IMR-90 (cell line): ENCODE measurements at regions of chr3 and their contacts with region 1.

Region 1: DNA sequence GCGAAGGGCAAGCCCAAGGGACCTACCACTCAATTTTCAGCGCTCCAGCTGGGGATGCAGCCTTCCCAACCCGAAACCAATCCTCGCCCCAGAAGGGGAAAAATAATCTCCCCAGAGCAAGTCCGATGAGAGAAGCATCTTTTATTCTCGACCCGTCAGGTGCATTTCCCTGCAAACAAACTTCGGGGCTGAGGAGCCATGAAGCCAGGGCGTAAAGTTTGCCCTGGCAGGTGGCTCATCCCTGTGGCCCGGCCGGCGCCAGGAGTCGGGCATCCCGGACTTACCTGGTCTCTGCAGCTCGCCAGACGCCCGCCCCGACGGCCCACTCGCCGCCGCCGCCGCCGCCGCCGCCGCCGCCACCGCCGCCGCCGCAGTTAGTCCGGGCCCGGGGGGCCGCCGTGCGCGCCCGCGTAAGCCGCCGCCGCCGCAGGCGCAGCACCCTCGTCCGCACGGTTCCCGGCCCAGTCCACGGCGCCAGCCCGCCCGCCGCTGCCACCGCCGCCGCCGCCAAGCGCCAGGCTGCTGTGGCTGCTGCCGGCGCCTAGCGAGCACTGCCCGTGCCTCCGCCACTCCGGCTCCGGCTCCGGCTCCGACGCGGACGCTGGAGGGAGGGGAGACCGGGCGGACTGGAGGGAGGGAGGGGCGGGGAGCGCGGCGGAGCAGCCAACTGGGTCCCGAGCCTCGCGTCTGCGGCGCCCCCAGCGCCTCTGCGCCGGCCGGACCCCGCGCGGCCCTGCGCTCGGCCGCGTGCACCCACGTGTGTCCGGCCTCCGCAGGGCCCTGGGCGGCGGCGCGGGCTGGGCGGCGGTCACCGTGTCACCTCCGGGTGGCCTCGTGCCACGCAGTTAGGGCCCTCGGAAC is at the start of gene CNTN3:
- DNase-seq: peak; percentile 49
- ATAC-seq: peak; percentile 88
- H3K4me3 ChIP-seq: peak within 1 kb of the TSS; percentile 68
- H3K27ac ChIP-seq: no peak within 1 kb of the TSS; the same call in 1 of the 2 replicates
- H3K4me1 ChIP-seq: peaks cover 3% of the 10 kb centered on the region; the same call in 1 of the 2 replicates
- H3K27me3 ChIP-seq: no peaks in the 10 kb centered on the region
- CTCF ChIP-seq: no peak
- POLR2A ChIP-seq: 0 out of 2 replicates have a peak, but pooled peaks have one; percentile 30
- RAD21 ChIP-seq: no peak
- total RNA-seq, gene CNTN3: 3.3 and 3.6 TPM in 2 replicates

Region 2: DNA sequence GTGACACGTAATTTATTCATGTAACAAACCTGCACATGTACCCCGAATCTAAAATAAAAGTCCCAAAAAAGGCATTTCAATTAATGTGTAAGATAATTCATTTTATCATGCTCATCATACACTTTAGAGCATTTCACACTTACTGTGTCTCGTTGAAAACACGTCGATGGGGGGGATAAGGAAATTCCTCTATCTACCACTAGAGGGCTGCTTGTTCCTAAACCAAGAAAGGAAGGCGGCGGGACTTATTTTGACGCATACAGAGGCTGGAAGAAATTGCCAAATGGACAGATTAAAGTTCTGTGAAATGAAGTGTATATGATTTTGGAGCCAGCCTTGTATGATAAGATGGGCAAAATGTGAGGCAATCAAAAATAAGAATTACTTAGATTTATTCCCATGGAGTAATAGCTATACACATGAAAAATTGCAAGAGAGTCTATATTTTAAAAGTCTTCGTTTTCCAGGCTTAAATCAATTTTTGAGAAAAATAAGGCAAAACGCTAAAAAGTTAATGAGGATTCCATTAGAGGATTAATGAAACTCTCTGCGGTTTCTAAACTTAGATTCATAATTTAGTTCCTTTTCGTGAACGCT is 346.7 kb before region 1 on chr3:
- CTCF ChIA-PET with region 1: no interaction called
- POLR2A ChIA-PET with region 1: no interaction called
- dilution Hi-C with region 1: no loop called
- in situ Hi-C with region 1: no loop called
- intact Hi-C with region 1: loop called (anchors 5 kb)
- DNase-seq: peak; percentile 63
- ATAC-seq: peak; percentile 81
- H3K4me3 ChIP-seq: no peak overlapping the region
- H3K27ac ChIP-seq: no peak overlapping the region
- H3K4me1 ChIP-seq: no peaks in the 10 kb centered on the region; the same call in 1 of the 2 replicates
- H3K27me3 ChIP-seq: no peaks in the 10 kb centered on the region
- CTCF ChIP-seq: peak; percentile 63
- POLR2A ChIP-seq: no peak
- RAD21 ChIP-seq: peak; percentile 60

Region 3: GRCh38 chr3:74426571-74426970 is 187.8 kb before region 1 on chr3:
- CTCF ChIA-PET with region 1: no interaction called
- POLR2A ChIA-PET with region 1: no interaction called
- dilution Hi-C with region 1: no loop called
- in situ Hi-C with region 1: no loop called
- intact Hi-C with region 1: loop called (anchors 10 kb)
- DNase-seq: peak; percentile 84
- ATAC-seq: peak; percentile 90
- H3K4me3 ChIP-seq: no peak overlapping the region
- H3K27ac ChIP-seq: no peak overlapping the region
- H3K4me1 ChIP-seq: no peaks in the 10 kb centered on the region
- H3K27me3 ChIP-seq: no peaks in the 10 kb centered on the region
- CTCF ChIP-seq: no peak
- POLR2A ChIP-seq: no peak
- RAD21 ChIP-seq: no peak

Region 4: DNA sequence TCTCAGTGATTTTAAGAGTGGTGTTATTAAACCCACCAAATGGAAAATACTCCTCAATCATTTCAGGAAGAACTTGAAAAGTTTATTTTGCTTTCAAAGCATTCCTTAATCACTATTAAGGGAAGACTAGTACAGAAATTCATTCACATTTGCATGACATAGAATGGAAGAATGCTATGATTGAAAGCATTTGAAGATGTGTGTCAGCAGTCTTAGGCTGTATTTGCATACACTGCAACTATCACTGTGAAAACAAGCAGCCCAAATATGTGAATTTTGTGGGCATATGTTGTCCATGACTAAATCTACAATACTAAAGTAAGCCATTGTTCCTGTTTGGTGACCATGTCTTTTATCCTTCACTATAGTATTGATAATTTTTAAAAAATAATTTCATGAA is 95.7 kb before region 1 on chr3:
- CTCF ChIA-PET with region 1: no interaction called
- POLR2A ChIA-PET with region 1: no interaction called
- dilution Hi-C with region 1: no loop called
- in situ Hi-C with region 1: no loop called
- intact Hi-C with region 1: loop called (anchors 5 kb)
- DNase-seq: peak; percentile 36
- ATAC-seq: peak; percentile 49; the same call in 1 of the 2 replicates
- H3K4me3 ChIP-seq: no peak overlapping the region
- H3K27ac ChIP-seq: no peak overlapping the region
- H3K4me1 ChIP-seq: no peaks in the 10 kb centered on the region; the same call in 1 of the 2 replicates
- H3K27me3 ChIP-seq: no peaks in the 10 kb centered on the region
- CTCF ChIP-seq: no peak
- POLR2A ChIP-seq: no peak
- RAD21 ChIP-seq: no peak

Region 5: DNA sequence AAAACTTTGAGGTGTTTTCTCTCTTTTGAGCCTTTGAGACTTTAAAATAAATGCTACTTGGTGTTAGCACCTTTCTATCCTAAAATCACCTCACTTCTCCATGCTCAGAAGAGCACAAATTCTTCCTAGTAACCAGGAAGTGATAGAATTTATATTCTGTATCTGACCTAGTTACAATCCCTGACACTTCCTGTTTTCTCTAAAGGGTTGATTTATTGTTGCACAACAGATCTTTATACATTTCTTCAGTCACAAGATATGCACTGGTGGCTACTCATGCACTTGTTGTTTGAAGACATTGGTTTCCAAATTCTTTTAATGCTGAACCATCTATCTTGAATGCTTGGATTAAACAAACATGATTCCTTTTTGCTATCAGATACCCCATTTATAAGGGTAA is 47.3 kb after region 1 on chr3:
- CTCF ChIA-PET with region 1: no interaction called
- POLR2A ChIA-PET with region 1: no interaction called
- dilution Hi-C with region 1: no loop called
- in situ Hi-C with region 1: no loop called
- intact Hi-C with region 1: no loop called
- DNase-seq: no peak
- ATAC-seq: no peak
- H3K4me3 ChIP-seq: no peak overlapping the region
- H3K27ac ChIP-seq: no peak overlapping the region
- H3K4me1 ChIP-seq: no peaks in the 10 kb centered on the region
- H3K27me3 ChIP-seq: no peaks in the 10 kb centered on the region
- CTCF ChIP-seq: no peak
- POLR2A ChIP-seq: no peak
- RAD21 ChIP-seq: no peak

Region 6: GRCh38 chr3:74673326-74673725 is 59.0 kb after region 1 on chr3:
- CTCF ChIA-PET with region 1: no interaction called
- POLR2A ChIA-PET with region 1: no interaction called
- dilution Hi-C with region 1: no loop called
- in situ Hi-C with region 1: no loop called
- intact Hi-C with region 1: no loop called
- DNase-seq: no peak
- ATAC-seq: no peak
- H3K4me3 ChIP-seq: no peak overlapping the region
- H3K27ac ChIP-seq: no peak overlapping the region
- H3K4me1 ChIP-seq: no peaks in the 10 kb centered on the region
- H3K27me3 ChIP-seq: no peaks in the 10 kb centered on the region
- CTCF ChIP-seq: no peak
- POLR2A ChIP-seq: no peak
- RAD21 ChIP-seq: no peak

Region 7: GRCh38 chr3:75089841-75090240 is 475.5 kb after region 1 on chr3:
- CTCF ChIA-PET with region 1: no interaction called
- POLR2A ChIA-PET with region 1: no interaction called
- dilution Hi-C with region 1: no loop called
- in situ Hi-C with region 1: no loop called
- intact Hi-C with region 1: no loop called
- DNase-seq: no peak
- ATAC-seq: no peak
- H3K4me3 ChIP-seq: no peak overlapping the region
- H3K27ac ChIP-seq: no peak overlapping the region
- H3K4me1 ChIP-seq: no peaks in the 10 kb centered on the region
- H3K27me3 ChIP-seq: no peaks in the 10 kb centered on the region
- CTCF ChIP-seq: no peak
- POLR2A ChIP-seq: no peak
- RAD21 ChIP-seq: no peak